ENCODE measurements at regions of chr1 and their contacts with region 1.

Region 1: DNA sequence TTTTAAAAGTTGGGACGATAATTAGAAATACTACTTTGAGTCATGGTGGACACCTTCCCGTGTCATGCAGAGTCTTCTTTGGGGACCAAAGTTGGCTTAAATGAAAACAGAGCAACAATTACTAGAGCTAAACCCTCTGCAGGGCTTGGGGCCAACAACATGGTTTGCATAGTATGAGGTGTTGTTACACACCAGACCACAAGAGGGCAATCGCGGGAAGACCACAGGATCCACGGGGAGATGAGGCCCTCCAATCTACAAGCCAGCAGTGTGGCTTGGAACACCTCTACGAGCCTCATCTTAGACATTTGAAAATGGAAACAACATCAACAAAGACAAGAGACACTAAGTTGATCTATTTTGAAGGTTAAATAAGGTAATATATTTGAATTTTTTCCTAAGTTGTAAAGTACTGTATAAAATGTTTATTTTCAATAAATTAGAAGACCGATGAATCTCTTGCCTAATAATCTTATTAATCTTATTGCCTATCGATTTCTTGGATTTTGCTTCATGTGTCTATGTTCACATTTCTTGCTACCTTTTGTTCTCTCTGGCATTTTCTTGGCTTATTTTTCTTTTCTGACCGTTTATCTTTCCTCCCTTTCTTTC is 8.2 kb upstream of the SMCP start:
- DNase-seq: peak; percentile 86
- H3K4me3 Mint-ChIP-seq: no peak overlapping the region
- H3K27ac Mint-ChIP-seq: no peak overlapping the region
- H3K4me1 Mint-ChIP-seq: no peaks in the 10 kb centered on the region
- H3K27me3 Mint-ChIP-seq: no peaks in the 10 kb centered on the region
- CTCF ChIP-seq: peak; percentile 90

Region 2: GRCh38 chr1:152679459-152679858 is 190.5 kb before region 1 on chr1:
- CTCF ChIA-PET with region 1: no interaction called
- intact Hi-C with region 1: no loop called
- DNase-seq: no peak
- H3K4me3 Mint-ChIP-seq: no peak overlapping the region
- H3K27ac Mint-ChIP-seq: no peak overlapping the region
- H3K4me1 Mint-ChIP-seq: no peaks in the 10 kb centered on the region
- H3K27me3 Mint-ChIP-seq: peaks cover 98% of the 10 kb centered on the region
- CTCF ChIP-seq: no peak

Region 3: GRCh38 chr1:152745289-152745704 is 124.6 kb before region 1 on chr1:
- CTCF ChIA-PET with region 1: interaction called, 3 read pairs
- intact Hi-C with region 1: loop called (anchors 5 kb)
- DNase-seq: peak; percentile 21
- H3K4me3 Mint-ChIP-seq: no peak overlapping the region
- H3K27ac Mint-ChIP-seq: no peak overlapping the region
- H3K4me1 Mint-ChIP-seq: peaks cover 10% of the 10 kb centered on the region
- H3K27me3 Mint-ChIP-seq: peaks cover 55% of the 10 kb centered on the region
- CTCF ChIP-seq: no peak

Region 4: GRCh38 chr1:152811050-152811449 is 58.9 kb before region 1 on chr1:
- CTCF ChIA-PET with region 1: no interaction called
- intact Hi-C with region 1: no loop called
- DNase-seq: no peak
- H3K4me3 Mint-ChIP-seq: no peak overlapping the region
- H3K27ac Mint-ChIP-seq: no peak overlapping the region
- H3K4me1 Mint-ChIP-seq: no peaks in the 10 kb centered on the region
- H3K27me3 Mint-ChIP-seq: peaks cover 65% of the 10 kb centered on the region
- CTCF ChIP-seq: no peak

Region 5: DNA sequence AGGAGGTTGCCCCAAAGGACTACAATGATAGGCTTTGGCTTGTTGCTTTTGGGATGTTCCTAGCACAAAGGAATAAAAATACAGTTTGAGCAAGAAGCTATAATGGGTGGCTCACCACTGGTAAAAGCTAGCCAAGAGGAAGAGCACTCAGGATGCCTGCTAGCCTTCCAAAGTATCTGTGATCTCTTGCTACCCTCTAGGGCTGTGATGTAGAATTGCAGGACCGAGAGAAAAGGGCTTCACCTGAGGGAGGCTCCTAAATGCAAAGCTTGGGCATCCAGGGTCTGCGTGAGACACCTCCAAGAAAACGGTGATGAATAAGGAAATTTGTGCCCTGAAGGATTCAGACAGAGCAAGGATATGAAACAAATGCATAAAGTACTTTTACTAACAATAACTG is 56.2 kb after region 1 on chr1:
- CTCF ChIA-PET with region 1: interaction called, 5 read pairs
- intact Hi-C with region 1: loop called (anchors 2 kb)
- DNase-seq: no peak
- H3K4me3 Mint-ChIP-seq: no peak overlapping the region
- H3K27ac Mint-ChIP-seq: no peak overlapping the region
- H3K4me1 Mint-ChIP-seq: peaks cover 13% of the 10 kb centered on the region
- H3K27me3 Mint-ChIP-seq: no peaks in the 10 kb centered on the region
- CTCF ChIP-seq: peak; percentile 43

Region 6: GRCh38 chr1:153180556-153180955 is 310.6 kb after region 1 on chr1:
- CTCF ChIA-PET with region 1: no interaction called
- intact Hi-C with region 1: no loop called
- DNase-seq: no peak
- H3K4me3 Mint-ChIP-seq: no peak overlapping the region
- H3K27ac Mint-ChIP-seq: no peak overlapping the region
- H3K4me1 Mint-ChIP-seq: no peaks in the 10 kb centered on the region
- H3K27me3 Mint-ChIP-seq: no peaks in the 10 kb centered on the region
- CTCF ChIP-seq: no peak

Region 7: GRCh38 chr1:153220606-153221303 is 350.8 kb after region 1 on chr1:
- CTCF ChIA-PET with region 1: no interaction called
- intact Hi-C with region 1: loop called (anchors 1 kb)
- DNase-seq: no peak
- H3K4me3 Mint-ChIP-seq: no peak overlapping the region
- H3K27ac Mint-ChIP-seq: no peak overlapping the region
- H3K4me1 Mint-ChIP-seq: peaks cover 11% of the 10 kb centered on the region
- H3K27me3 Mint-ChIP-seq: peaks cover 89% of the 10 kb centered on the region
- CTCF ChIP-seq: no peak

Region 8: DNA sequence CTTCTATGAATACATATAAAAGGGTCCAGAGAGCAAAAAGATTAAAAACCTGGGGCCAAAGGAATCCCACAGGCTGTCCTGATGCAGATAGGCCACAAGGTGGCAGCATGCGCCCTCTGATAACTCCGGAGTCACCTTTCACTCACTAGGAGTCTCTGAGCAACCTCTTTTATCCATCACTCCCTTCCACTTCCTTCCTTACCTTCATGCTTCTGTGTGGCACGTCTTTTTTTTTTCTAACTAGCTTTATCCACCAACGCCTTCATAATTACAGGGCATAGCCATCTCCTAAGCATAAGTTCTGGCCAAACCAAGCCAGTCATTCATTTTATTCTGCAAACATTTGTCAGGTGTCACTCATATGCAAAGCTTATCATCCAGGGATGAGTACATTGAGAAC is 482.6 kb after region 1 on chr1:
- CTCF ChIA-PET with region 1: no interaction called
- intact Hi-C with region 1: no loop called
- DNase-seq: peak; percentile 73
- H3K4me3 Mint-ChIP-seq: no peak overlapping the region
- H3K27ac Mint-ChIP-seq: no peak overlapping the region
- H3K4me1 Mint-ChIP-seq: peaks cover 26% of the 10 kb centered on the region
- H3K27me3 Mint-ChIP-seq: peaks cover 65% of the 10 kb centered on the region
- CTCF ChIP-seq: peak; percentile 93